ENCODE measurements at regions of chr12 and their contacts with region 1.

Region 1: GRCh38 chr12:2276288-2277033 is 223.7 kb downstream of the CACNA1C start:
- DNase-seq: no peak
- H3K4me3 ChIP-seq: no peak overlapping the region
- CTCF ChIP-seq: no peak

Region 2: GRCh38 chr12:2291182-2291832 is 14.8 kb after region 1 on chr12:
- CTCF ChIA-PET with region 1: interaction called, 71 read pairs
- POLR2A ChIA-PET with region 1: no interaction called
- DNase-seq: no peak
- H3K4me3 ChIP-seq: no peak overlapping the region
- CTCF ChIP-seq: peak; percentile 53

Region 3: GRCh38 chr12:2574355-2574935 is 298.0 kb after region 1 on chr12:
- CTCF ChIA-PET with region 1: no interaction called
- POLR2A ChIA-PET with region 1: no interaction called
- DNase-seq: no peak
- H3K4me3 ChIP-seq: no peak overlapping the region
- CTCF ChIP-seq: no peak